Activated CD8-positive, alpha-beta T cell treated with anti-CD3 and anti-CD28 coated beads for 36 hours (primary cell): ENCODE measurements at regions of chr3 and their contacts with region 1.

Region 1: GRCh38 chr3:129593595-129594339 is 12.7 kb downstream of the PLXND1 start:
- DNase-seq: peak; percentile 86
- ATAC-seq: peak; percentile 75
- H3K4me3 Mint-ChIP-seq: peak overlapping the region; percentile 45
- H3K27ac Mint-ChIP-seq: peak overlapping the region; percentile 75
- H3K4me1 Mint-ChIP-seq: peaks cover 20% of the 10 kb centered on the region
- H3K27me3 Mint-ChIP-seq: peaks cover 10% of the 10 kb centered on the region
- CTCF ChIP-seq: no peak

Region 2: GRCh38 chr3:129305592-129306091 is 288.1 kb before region 1 on chr3:
- CTCF ChIA-PET with region 1: no interaction called
- POLR2A ChIA-PET with region 1: no interaction called
- intact Hi-C with region 1: no loop called
- DNase-seq: peak; percentile 37
- ATAC-seq: no peak
- H3K4me3 Mint-ChIP-seq: no peak overlapping the region
- H3K27ac Mint-ChIP-seq: no peak overlapping the region
- H3K4me1 Mint-ChIP-seq: peaks cover 37% of the 10 kb centered on the region
- H3K27me3 Mint-ChIP-seq: no peaks in the 10 kb centered on the region
- CTCF ChIP-seq: no peak

Region 3: DNA sequence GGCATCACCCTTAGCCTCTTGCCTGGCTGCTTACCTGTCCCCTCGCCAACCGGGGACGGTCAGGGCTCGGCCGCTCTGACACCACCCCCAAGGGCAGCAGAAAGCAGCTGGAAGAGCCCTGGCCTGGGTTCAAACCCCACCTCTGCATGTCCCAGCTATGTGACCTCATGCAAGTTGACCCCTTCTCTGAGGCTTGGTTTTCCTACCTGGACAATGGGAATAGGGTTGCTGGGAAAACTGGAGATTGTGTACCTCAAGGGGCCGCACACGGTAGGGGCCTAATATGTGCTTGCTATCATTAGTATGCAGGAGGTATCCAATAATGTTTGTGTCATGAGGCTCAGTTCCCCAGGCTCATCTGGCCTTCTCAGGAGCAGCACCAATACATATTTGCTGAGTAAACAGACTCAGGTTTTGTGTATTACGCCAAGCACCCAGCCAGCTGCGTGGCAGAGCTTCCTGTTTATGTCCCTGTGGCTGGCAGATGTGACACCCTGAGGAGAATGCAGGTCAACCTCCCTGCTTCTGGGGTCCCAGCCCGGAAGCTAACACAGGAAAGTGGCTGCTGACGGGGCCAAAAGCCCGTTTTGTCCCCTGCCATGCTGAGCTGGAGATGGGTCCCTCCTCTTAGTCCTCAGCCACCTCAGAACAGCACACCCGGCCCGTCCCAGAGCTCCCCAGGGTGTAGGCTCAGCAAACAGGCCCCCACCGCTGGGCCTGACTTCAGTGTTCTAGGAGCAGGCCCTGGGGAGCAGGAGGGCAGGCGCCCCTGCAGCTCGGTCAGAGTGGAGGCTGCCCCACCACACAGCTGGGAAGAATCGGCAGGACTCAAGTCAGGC is 17.0 kb before region 1 on chr3:
- CTCF ChIA-PET with region 1: interaction called, 6 read pairs
- POLR2A ChIA-PET with region 1: interaction called, 12 read pairs
- intact Hi-C with region 1: no loop called
- DNase-seq: peak; percentile 76
- ATAC-seq: peak; percentile 82
- H3K4me3 Mint-ChIP-seq: peak overlapping the region; percentile 26
- H3K27ac Mint-ChIP-seq: peak overlapping the region; percentile 79
- H3K4me1 Mint-ChIP-seq: peaks cover 33% of the 10 kb centered on the region
- H3K27me3 Mint-ChIP-seq: no peaks in the 10 kb centered on the region
- CTCF ChIP-seq: no peak